Colonic mucosa (tissue), 4 donors: ENCODE measurements at regions of chr11 and their contacts with region 1.

Region 1: DNA sequence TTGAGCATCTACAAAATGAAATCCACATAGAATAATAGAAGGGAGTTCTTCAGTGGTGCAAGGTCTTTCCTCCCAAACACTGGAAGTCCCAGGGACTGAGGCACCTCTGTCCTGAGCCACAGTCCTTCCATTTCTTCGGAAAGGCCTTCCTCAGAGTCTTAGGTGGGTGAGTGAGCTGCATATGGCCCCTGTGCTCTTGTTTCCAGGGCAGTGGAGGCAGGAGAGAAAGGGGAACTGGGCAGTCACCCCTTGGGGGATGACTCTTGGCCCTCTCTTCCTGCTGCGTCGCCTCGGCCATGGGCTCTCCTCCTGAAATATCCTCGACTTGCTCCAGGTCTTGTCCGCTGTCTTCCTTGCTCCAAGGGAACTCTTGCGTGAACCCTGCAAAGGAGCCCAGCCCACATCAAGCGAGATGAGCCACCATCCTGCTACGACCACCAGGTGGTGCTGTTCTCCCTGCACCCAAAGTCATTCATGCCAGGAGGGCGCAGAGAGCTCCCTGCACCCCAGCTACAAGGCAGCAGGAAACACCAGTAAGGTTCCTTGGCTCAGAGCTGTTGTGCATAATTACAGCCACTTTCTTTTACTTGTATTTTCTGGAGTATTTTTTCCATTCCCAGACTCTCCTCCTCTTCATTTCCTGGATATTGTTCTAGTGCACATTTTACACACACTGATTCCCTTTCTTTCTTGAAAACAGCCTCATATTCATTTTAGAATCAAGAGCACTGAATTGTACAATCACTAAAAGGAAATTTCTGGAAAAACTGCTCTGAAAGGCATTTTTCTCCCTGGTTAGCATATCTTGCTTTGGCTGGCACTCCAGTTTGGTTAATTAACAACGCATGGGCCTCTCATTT is 397.8 kb downstream of the OPCML start:
- DNase-seq: peak; percentile 52
- H3K4me3 ChIP-seq: no peak overlapping the region
- H3K27ac ChIP-seq: no peak overlapping the region
- H3K4me1 ChIP-seq: no peaks in the 10 kb centered on the region
- H3K27me3 ChIP-seq: no peaks in the 10 kb centered on the region
- CTCF ChIP-seq: peak; percentile 66

Region 2: GRCh38 chr11:133821776-133822175 is 687.2 kb after region 1 on chr11:
- intact Hi-C with region 1: loop called (anchors 5 kb)
- DNase-seq: peak; percentile 46
- H3K4me3 ChIP-seq: no peak overlapping the region
- H3K27ac ChIP-seq: no peak overlapping the region
- H3K4me1 ChIP-seq: no peaks in the 10 kb centered on the region
- H3K27me3 ChIP-seq: no peaks in the 10 kb centered on the region
- CTCF ChIP-seq: peak; percentile 34